Natural killer cell (primary cell): ENCODE measurements at regions of chr11 and their contacts with region 1.

Region 1: GRCh38 chr11:48109046-48109666 is 107.5 kb upstream of the OR4B1 start:
- DNase-seq: peak in 1 of 2 donors; percentile 65
- ATAC-seq: peak; percentile 37 to 49 (median 48)
- H3K4me3 ChIP-seq: no peak overlapping the region
- H3K4me3 Mint-ChIP-seq: peak overlapping the region; percentile 47
- H3K27ac ChIP-seq: peak overlapping the region; percentile 52
- H3K27ac Mint-ChIP-seq: peak overlapping the region; percentile 67 to 69
- H3K4me1 ChIP-seq: peaks cover 49% of the 10 kb centered on the region
- H3K4me1 Mint-ChIP-seq: peaks cover 39 to 55% of the 10 kb centered on the region in 2 donors
- H3K27me3 ChIP-seq: no peaks in the 10 kb centered on the region
- H3K27me3 Mint-ChIP-seq: no peaks in the 10 kb centered on the region
- CTCF ChIP-seq: no peak

Region 2: DNA sequence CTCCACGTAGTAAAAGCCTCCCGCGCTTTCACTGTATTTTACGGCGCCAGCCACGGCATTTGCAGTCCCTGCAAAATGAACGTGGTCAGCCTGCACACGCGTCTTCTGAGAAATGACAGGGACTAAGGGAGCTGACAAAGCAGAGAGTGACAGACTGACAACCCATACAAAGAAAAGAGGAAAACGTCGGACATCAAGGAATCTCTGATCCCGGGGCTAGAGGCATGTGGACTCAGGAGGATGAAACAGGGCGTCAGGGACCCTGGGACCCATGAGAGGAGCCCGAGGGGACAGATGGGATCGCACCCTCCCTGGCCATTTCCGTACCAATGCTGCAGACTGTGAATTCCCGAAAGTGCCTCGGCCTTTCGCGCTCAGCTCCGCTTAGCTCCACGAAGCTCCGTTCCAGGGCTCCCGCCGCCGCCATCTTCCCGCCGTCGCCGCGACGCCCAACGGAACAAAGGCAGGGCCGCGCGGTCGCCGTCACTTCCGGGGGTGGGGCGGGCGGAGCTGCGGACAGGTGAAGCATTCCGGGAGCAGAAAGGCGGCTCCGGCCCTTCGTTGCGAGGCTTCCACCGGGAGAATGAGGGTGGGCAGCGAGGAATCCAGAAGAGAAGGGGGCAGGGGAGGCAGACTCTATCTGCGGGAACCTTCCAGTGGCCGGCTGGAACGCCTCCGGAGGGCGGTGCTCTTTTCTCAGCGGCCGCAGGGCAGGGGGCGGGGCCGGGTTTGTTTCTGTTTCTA is 261.1 kb before region 1 on chr11 and contains the start of gene NUP160:
- intact Hi-C with region 1: loop called (anchors 5 kb)
- DNase-seq: peak; percentile 89 to 90
- ATAC-seq: peak; percentile 89 to 92 (median 90)
- H3K4me3 ChIP-seq: peak within 1 kb of the TSS; percentile 82
- H3K4me3 Mint-ChIP-seq: peak within 1 kb of the TSS; percentile 98
- H3K27ac ChIP-seq: peak within 1 kb of the TSS; percentile 87
- H3K27ac Mint-ChIP-seq: peak within 1 kb of the TSS; percentile 95
- H3K4me1 ChIP-seq: peaks cover 20% of the 10 kb centered on the region
- H3K4me1 Mint-ChIP-seq: peaks cover 23 to 25% of the 10 kb centered on the region in 2 donors
- H3K27me3 ChIP-seq: no peaks in the 10 kb centered on the region
- H3K27me3 Mint-ChIP-seq: no peaks in the 10 kb centered on the region
- CTCF ChIP-seq: no peak
- total RNA-seq, gene NUP160: 36.6 to 53.3 (median 43.5) TPM

Region 3: GRCh38 chr11:47863189-47863892 is 245.8 kb before region 1 on chr11:
- intact Hi-C with region 1: no loop called
- DNase-seq: peak in 1 of 2 donors; percentile 52
- ATAC-seq: peak in 2 of 3 donors; percentile 21 to 45
- H3K4me3 ChIP-seq: no peak overlapping the region
- H3K4me3 Mint-ChIP-seq: no peak overlapping the region
- H3K27ac ChIP-seq: peak overlapping the region; percentile 40
- H3K27ac Mint-ChIP-seq: no peak overlapping the region
- H3K4me1 ChIP-seq: peaks cover 11% of the 10 kb centered on the region
- H3K4me1 Mint-ChIP-seq: peaks cover 8 to 13% of the 10 kb centered on the region in 2 donors
- H3K27me3 ChIP-seq: no peaks in the 10 kb centered on the region
- H3K27me3 Mint-ChIP-seq: peaks cover 2 to 5% of the 10 kb centered on the region in 2 donors
- CTCF ChIP-seq: no peak

Region 4: GRCh38 chr11:47932544-47932943 is 176.6 kb before region 1 on chr11:
- intact Hi-C with region 1: loop called (anchors 1 kb)
- DNase-seq: no peak
- ATAC-seq: no peak
- H3K4me3 ChIP-seq: no peak overlapping the region
- H3K4me3 Mint-ChIP-seq: no peak overlapping the region
- H3K27ac ChIP-seq: no peak overlapping the region
- H3K27ac Mint-ChIP-seq: no peak overlapping the region
- H3K4me1 ChIP-seq: peaks cover 7% of the 10 kb centered on the region
- H3K4me1 Mint-ChIP-seq: peaks cover 5% of the 10 kb centered on the region in 2 donors
- H3K27me3 ChIP-seq: no peaks in the 10 kb centered on the region
- H3K27me3 Mint-ChIP-seq: peaks cover 0 to 6% of the 10 kb centered on the region in 2 donors
- CTCF ChIP-seq: no peak

Region 5: DNA sequence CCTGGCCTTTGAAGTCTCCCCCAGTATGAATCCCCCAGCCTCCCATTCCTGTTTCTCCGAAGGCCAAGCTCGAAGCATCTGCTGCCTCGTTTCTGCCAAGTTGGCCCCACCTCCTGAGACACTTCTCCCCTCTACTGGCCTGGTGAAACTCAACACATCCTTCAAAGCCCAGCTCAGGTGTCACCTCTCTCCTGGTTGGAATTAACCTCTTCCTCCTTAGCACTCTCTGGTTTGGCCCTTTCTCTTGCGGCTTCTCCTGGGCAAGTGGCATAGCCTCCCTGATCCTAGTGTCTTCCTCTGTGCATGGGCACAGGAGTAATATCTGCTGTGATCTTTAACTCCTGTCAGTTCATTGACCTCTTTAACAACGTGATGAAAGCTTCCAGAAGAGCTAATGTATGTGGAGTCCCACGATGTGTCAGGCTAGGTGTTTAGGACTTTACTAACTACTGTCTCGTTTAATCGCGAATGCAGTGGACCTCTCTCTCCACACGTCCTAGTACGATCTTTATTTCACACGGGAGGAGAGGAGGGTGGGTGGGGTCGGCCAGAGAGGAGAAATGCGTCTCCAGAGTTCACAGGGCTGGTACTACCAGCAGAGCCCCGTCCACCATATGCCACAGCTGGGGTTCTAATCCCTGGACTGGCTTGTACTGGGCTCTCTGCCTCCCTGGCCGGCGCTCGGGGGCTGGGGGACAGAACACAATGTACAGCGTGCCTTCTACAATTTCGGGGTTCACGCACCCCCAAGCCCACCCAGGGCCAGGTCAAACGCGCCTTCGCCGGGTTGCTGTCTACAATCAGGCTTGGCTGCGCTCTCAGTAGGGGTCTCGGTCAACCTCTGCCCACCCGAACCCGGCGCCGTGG is 129.5 kb before region 1 on chr11:
- intact Hi-C with region 1: no loop called
- DNase-seq: no peak
- ATAC-seq: no peak
- H3K4me3 ChIP-seq: peak overlapping the region; percentile 13
- H3K4me3 Mint-ChIP-seq: peak overlapping the region; percentile 74
- H3K27ac ChIP-seq: no peak overlapping the region
- H3K27ac Mint-ChIP-seq: peak overlapping the region; percentile 68 to 75
- H3K4me1 ChIP-seq: peaks cover 41% of the 10 kb centered on the region
- H3K4me1 Mint-ChIP-seq: peaks cover 37 to 41% of the 10 kb centered on the region in 2 donors
- H3K27me3 ChIP-seq: no peaks in the 10 kb centered on the region
- H3K27me3 Mint-ChIP-seq: no peaks in the 10 kb centered on the region
- CTCF ChIP-seq: no peak